ENCODE measurements at regions of chr1 and their contacts with region 1.

Region 1: GRCh38 chr1:32947669-32948389 is 16.8 kb downstream of the RNF19B start:
- DNase-seq: no peak
- CTCF ChIP-seq: no peak

Region 2: GRCh38 chr1:32958827-32959226 is 11.0 kb after region 1 on chr1:
- CTCF ChIA-PET with region 1: interaction called, 4 read pairs
- POLR2A ChIA-PET with region 1: interaction called, 10 read pairs
- DNase-seq: no peak
- CTCF ChIP-seq: no peak

Region 3: DNA sequence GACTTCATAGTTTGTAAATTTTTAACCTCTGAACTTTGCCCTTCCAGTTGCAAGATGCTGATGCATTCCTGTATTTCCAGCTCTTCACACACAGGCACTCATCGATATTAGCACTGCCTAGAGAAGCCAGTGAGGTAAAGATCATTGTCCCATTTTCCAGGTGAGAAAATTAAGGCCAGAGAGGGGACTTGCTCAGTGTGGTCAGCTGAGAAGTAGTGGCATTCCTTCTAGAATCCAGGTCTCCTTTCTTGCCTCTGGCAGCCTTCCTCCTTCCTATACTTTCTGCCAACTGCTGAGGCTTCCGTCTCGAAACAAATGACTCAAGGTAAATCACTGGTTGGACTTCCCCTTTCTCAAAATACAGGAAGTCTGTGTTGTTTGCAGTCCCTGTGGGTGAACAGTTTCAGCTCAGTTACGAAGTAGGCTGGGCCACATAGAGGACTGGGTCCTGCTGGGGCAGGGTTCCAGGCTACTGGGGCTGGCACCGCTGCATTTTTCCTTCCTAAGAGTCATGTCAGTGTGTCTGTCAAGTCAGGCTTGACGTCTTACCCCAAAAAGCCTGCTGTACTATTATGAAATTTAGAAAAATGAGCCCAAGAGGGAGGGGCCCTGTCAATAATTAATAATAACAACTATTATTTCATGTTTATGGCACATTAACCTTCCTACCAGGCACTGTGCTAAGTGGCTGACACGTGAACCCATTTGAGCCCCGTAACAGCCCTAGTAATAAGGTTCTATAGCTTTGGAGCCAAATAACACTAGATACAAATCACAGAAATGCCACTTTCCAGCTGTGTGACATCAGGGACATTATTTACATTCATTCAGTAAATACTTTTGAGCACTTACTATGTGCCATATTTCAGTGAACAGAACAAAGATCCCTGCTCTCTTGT is 33.4 kb after region 1 on chr1:
- CTCF ChIA-PET with region 1: no interaction called
- POLR2A ChIA-PET with region 1: no interaction called
- DNase-seq: peak; percentile 85
- CTCF ChIP-seq: no peak